Activated B cell treated with CpG ODN at 0.5 μM for 24 hours (primary cell): ENCODE measurements at regions of chr12 and their contacts with region 1.

Region 1: GRCh38 chr12:89709157-89709994 is 738 bp upstream of the ATP2B1 start:
- DNase-seq: peak; percentile 97
- ATAC-seq: peak; percentile 75
- H3K4me3 Mint-ChIP-seq: peak overlapping the region; percentile 91
- H3K27ac Mint-ChIP-seq: peak overlapping the region; percentile 94
- H3K4me1 Mint-ChIP-seq: peaks cover 40% of the 10 kb centered on the region
- H3K27me3 Mint-ChIP-seq: no peaks in the 10 kb centered on the region
- CTCF ChIP-seq: no peak

Region 2: DNA sequence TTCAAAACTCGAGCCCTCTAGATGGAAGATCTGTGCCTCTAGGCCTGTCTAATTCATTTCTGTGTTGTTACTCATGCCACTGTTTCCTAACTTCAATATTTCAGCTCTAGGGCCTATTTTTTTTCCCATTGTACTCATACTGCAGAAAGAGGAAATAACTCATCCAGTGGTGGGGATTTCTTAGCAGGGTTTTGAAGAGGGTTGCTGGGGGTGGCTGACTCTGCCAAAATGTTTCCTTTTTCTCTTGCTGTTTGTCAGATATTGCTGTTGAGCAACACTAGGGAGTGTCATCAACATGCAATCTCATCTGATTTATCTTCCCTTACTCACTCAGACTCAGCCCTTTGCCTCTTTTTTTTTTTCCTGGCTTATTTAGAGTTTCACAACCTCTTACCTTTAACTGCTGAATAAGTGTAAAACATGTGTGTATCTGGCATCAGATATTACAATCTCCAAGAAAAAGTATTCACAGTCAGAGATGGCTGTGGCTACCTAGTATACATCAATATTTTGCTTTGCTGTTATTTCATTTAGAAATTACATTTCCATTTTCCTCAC is 546.6 kb before region 1 on chr12:
- CTCF ChIA-PET with region 1: no interaction called
- POLR2A ChIA-PET with region 1: interaction called, 4 read pairs
- intact Hi-C with region 1: loop called (anchors 1 kb)
- DNase-seq: no peak
- ATAC-seq: peak; percentile 56
- H3K4me3 Mint-ChIP-seq: no peak overlapping the region
- H3K27ac Mint-ChIP-seq: no peak overlapping the region
- H3K4me1 Mint-ChIP-seq: peaks cover 28% of the 10 kb centered on the region
- H3K27me3 Mint-ChIP-seq: no peaks in the 10 kb centered on the region
- CTCF ChIP-seq: no peak

Region 3: GRCh38 chr12:89621521-89621920 is 87.9 kb before region 1 on chr12:
- CTCF ChIA-PET with region 1: no interaction called
- POLR2A ChIA-PET with region 1: no interaction called
- intact Hi-C with region 1: no loop called
- DNase-seq: no peak
- ATAC-seq: no peak
- H3K4me3 Mint-ChIP-seq: no peak overlapping the region
- H3K27ac Mint-ChIP-seq: no peak overlapping the region
- H3K4me1 Mint-ChIP-seq: peaks cover 8% of the 10 kb centered on the region
- H3K27me3 Mint-ChIP-seq: no peaks in the 10 kb centered on the region
- CTCF ChIP-seq: no peak

Region 4: DNA sequence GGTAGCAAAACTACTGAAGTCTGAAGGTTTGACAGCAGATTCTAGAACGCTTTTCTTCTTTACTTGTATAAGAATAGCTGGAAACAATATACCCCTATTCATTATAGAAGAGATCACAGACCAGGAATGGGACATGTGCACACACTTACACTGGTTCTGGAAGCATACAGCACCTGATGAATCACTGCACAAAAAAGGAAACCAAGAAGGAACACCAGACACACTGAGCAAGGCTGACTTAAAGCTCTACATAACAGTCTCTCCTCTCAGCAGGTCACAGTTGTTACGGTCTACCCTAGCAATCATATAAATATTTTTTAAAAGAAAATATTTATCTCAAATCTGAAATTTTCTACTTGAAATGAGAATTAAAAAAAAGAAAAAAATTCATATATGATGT is 14.3 kb before region 1 on chr12:
- CTCF ChIA-PET with region 1: interaction called, 4 read pairs
- POLR2A ChIA-PET with region 1: interaction called, 17 read pairs
- intact Hi-C with region 1: loop called (anchors 1 kb)
- DNase-seq: no peak
- ATAC-seq: no peak
- H3K4me3 Mint-ChIP-seq: no peak overlapping the region
- H3K27ac Mint-ChIP-seq: no peak overlapping the region
- H3K4me1 Mint-ChIP-seq: peaks cover 92% of the 10 kb centered on the region
- H3K27me3 Mint-ChIP-seq: no peaks in the 10 kb centered on the region
- CTCF ChIP-seq: no peak

Region 5: DNA sequence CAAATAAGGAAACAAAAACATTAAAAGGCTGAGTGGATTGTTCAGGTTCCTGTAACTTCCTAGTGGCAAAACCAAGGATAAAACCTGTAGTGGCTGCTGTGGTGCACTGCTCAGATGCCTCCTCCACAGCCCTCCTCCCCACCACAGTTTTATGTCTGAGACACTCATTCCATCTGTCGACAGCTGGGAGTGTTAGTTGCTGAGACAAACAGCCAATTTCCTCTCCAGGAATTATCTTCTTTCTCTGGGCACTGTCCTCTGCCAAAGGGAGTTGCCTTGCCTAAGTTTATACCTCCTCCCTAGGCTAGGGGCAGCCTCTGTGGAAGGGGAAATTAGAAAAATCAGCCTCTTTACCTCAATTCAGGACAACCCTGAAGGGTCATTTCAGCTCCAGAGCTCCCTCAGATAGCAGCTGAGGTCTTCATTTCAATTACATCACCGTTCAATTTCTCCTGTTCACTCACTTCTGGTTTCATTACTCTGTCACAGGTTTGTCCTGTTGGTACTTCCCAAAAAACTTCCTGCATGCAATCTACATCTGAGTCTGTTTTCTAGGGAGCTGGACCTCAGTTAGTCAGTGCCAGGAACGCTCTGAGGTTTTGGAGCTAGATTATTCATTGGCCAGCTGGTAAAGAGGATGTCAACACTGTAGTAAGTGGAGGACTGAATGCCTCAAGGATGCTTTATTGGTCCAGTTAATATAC is 74.1 kb after region 1 on chr12:
- CTCF ChIA-PET with region 1: no interaction called
- POLR2A ChIA-PET with region 1: interaction called, 12 read pairs
- intact Hi-C with region 1: no loop called
- DNase-seq: no peak
- ATAC-seq: no peak
- H3K4me3 Mint-ChIP-seq: no peak overlapping the region
- H3K27ac Mint-ChIP-seq: no peak overlapping the region
- H3K4me1 Mint-ChIP-seq: peaks cover 14% of the 10 kb centered on the region
- H3K27me3 Mint-ChIP-seq: no peaks in the 10 kb centered on the region
- CTCF ChIP-seq: no peak

Region 6: GRCh38 chr12:89882050-89882449 is 172.7 kb after region 1 on chr12:
- CTCF ChIA-PET with region 1: interaction called, 5 read pairs
- POLR2A ChIA-PET with region 1: interaction called, 84 read pairs
- intact Hi-C with region 1: loop called (anchors 1 kb)
- DNase-seq: no peak
- ATAC-seq: peak; percentile 52
- H3K4me3 Mint-ChIP-seq: peak overlapping the region; percentile 76
- H3K27ac Mint-ChIP-seq: peak overlapping the region; percentile 97
- H3K4me1 Mint-ChIP-seq: peaks cover 62% of the 10 kb centered on the region
- H3K27me3 Mint-ChIP-seq: no peaks in the 10 kb centered on the region
- CTCF ChIP-seq: no peak

Region 7: DNA sequence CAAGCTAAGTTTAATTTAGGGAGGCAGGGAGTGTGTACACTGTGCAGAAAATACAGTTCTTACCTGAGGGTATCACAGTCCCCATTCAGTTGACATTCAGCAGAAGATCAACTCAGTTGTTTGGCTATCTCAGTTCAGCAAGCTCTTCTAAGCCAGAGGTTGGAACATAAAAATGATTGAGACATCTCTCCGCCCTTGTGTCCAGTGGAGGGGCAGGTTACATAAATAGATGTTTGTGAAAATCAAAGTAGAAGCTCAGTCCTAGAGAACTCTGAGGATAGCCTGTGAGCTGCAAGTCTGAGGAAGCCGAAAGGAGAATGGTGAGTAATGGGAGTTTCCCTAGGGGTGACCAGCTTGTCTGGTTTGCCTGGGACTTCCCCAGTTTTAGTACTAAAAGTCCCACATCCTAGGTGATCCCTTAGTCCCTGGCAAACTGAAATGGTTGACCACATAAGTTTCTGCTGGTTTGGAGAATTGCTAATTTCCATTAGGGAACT is 250.7 kb after region 1 on chr12:
- CTCF ChIA-PET with region 1: interaction called, 8 read pairs
- POLR2A ChIA-PET with region 1: interaction called, 43 read pairs
- intact Hi-C with region 1: loop called (anchors 1 kb)
- DNase-seq: no peak
- ATAC-seq: peak; percentile 92
- H3K4me3 Mint-ChIP-seq: peak overlapping the region; percentile 74
- H3K27ac Mint-ChIP-seq: peak overlapping the region; percentile 85
- H3K4me1 Mint-ChIP-seq: peaks cover 38% of the 10 kb centered on the region
- H3K27me3 Mint-ChIP-seq: no peaks in the 10 kb centered on the region
- CTCF ChIP-seq: no peak